ENCODE measurements at regions of chr7 and their contacts with region 1.

Region 1: GRCh38 chr7:74289018-74289658 is at the start of gene CLIP2:
- DNase-seq: peak; percentile 61 to 69 (median 68)
- H3K4me3 ChIP-seq: peak within 1 kb of the TSS; percentile 56 to 85 (median 74)
- H3K4me3 Mint-ChIP-seq: peak within 1 kb of the TSS; percentile 83 to 88
- H3K27ac ChIP-seq: peak within 1 kb of the TSS in 1 of 2 donors; percentile 51
- H3K27ac Mint-ChIP-seq: peak within 1 kb of the TSS in 6 of 7 donors; percentile 24 to 73 (median 62)
- H3K4me1 ChIP-seq: peaks cover 30 to 38% of the 10 kb centered on the region in 2 donors
- H3K4me1 Mint-ChIP-seq: peaks cover 47% of the 10 kb centered on the region
- H3K27me3 ChIP-seq: no peaks in the 10 kb centered on the region
- H3K27me3 Mint-ChIP-seq: peaks cover 2 to 20% (median 14%) of the 10 kb centered on the region in 3 donors
- CTCF ChIP-seq: no peak
- polyA plus RNA-seq, gene CLIP2: 1.1 to 5.2 (median 1.3) TPM

Region 2: GRCh38 chr7:74061840-74062539 is 227.1 kb before region 1 on chr7:
- intact Hi-C with region 1: loop called in 1 of 2 experiments (anchors 10 kb)
- DNase-seq: peak; percentile 57 to 76 (median 68)
- H3K4me3 ChIP-seq: no peak overlapping the region
- H3K4me3 Mint-ChIP-seq: no peak overlapping the region
- H3K27ac ChIP-seq: peak overlapping the region in 1 of 2 donors; percentile 14
- H3K27ac Mint-ChIP-seq: peak overlapping the region; percentile 74 to 92 (median 83)
- H3K4me1 ChIP-seq: peaks cover 8 to 11% of the 10 kb centered on the region in 2 donors
- H3K4me1 Mint-ChIP-seq: peaks cover 15% of the 10 kb centered on the region
- H3K27me3 ChIP-seq: no peaks in the 10 kb centered on the region
- H3K27me3 Mint-ChIP-seq: peaks cover 0 to 8% (median 5%) of the 10 kb centered on the region in 3 donors
- CTCF ChIP-seq: no peak

Region 3: DNA sequence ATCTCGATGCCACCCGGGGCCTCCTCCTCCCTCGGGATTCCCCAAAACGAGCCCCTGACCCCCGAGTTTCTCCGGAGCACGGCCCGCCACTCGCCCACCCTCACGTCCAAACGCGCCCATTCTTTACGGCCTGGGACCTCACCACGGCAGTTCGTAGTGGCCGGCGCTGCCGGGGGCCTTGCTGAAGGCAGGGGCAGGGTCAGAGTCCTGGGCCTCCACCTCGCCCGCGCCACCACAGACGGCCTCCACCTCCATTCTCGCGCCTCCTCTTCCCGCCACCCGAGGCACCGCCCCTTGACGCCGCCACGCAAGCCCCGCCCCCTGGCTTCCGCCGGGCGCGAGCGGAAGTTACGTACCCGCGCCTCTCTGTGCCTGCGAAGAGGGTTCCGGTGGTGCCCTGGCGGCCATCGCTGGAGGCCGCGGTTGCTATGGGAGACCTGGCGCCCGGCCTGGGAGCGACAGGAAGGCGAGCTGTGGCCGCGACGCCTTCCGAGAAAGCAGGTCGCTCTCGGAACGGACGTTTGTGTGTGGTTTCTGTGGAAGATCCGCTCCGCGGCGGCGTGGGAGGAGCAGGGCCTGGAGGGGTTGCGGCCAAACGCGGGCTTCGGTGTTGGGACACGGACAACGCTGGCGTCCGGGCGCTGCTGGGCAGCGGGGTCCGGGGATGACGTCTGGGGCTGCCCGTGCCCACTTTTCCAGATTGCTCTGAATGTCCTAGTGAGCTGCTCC is 34.8 kb before region 1 on chr7 and contains the start of gene RFC2:
- intact Hi-C with region 1: loop called (anchors 2 to 5 kb)
- DNase-seq: peak; percentile 94 to 97 (median 96)
- H3K4me3 ChIP-seq: peak within 1 kb of the TSS; percentile 91 to 97 (median 95)
- H3K4me3 Mint-ChIP-seq: peak within 1 kb of the TSS; percentile 92 to 96
- H3K27ac ChIP-seq: peak within 1 kb of the TSS; percentile 75 to 86
- H3K27ac Mint-ChIP-seq: peak within 1 kb of the TSS; percentile 89 to 98 (median 96)
- H3K4me1 ChIP-seq: peaks cover 27 to 36% of the 10 kb centered on the region in 2 donors
- H3K4me1 Mint-ChIP-seq: peaks cover 31% of the 10 kb centered on the region
- H3K27me3 ChIP-seq: no peaks in the 10 kb centered on the region
- H3K27me3 Mint-ChIP-seq: no peaks in the 10 kb centered on the region
- CTCF ChIP-seq: peak; percentile 19
- polyA plus RNA-seq, gene RFC2: 12.8 to 42.1 (median 33.5) TPM